ENCODE measurements at regions of chr6 and their contacts with region 1.

Region 1: DNA sequence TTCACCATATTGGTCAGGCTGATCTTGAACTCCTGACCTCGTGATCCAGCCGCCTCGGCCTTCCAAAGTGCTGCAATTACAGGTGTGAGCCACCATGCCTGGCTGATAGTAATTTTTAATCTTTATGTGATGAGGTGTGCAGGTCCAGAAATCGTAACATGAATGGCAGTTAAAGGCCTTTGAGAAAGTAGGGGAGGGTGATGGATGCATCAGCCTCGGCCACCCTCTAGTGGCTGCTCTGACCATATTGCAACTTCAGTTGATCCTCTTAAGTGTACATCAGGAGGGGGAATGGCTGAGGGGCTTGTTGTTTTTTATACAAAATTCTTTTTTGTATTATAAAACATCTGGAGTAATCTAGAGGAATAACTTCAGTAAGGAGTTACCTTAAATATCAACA is 193.0 kb downstream of the ZFAND3 start:
- DNase-seq: peak; percentile 60
- H3K4me3 ChIP-seq: no peak overlapping the region
- H3K27ac ChIP-seq: no peak overlapping the region
- H3K4me1 ChIP-seq: no peaks in the 10 kb centered on the region
- CTCF ChIP-seq: peak; percentile 87

Region 2: GRCh38 chr6:37705239-37706051 is 307.1 kb before region 1 on chr6:
- CTCF ChIA-PET with region 1: no interaction called
- POLR2A ChIA-PET with region 1: no interaction called
- intact Hi-C with region 1: loop called (anchors 5 kb)
- DNase-seq: no peak
- H3K4me3 ChIP-seq: no peak overlapping the region
- H3K27ac ChIP-seq: no peak overlapping the region
- H3K4me1 ChIP-seq: no peaks in the 10 kb centered on the region
- CTCF ChIP-seq: peak; percentile 38; the same call in 1 of the 2 replicates

Region 3: DNA sequence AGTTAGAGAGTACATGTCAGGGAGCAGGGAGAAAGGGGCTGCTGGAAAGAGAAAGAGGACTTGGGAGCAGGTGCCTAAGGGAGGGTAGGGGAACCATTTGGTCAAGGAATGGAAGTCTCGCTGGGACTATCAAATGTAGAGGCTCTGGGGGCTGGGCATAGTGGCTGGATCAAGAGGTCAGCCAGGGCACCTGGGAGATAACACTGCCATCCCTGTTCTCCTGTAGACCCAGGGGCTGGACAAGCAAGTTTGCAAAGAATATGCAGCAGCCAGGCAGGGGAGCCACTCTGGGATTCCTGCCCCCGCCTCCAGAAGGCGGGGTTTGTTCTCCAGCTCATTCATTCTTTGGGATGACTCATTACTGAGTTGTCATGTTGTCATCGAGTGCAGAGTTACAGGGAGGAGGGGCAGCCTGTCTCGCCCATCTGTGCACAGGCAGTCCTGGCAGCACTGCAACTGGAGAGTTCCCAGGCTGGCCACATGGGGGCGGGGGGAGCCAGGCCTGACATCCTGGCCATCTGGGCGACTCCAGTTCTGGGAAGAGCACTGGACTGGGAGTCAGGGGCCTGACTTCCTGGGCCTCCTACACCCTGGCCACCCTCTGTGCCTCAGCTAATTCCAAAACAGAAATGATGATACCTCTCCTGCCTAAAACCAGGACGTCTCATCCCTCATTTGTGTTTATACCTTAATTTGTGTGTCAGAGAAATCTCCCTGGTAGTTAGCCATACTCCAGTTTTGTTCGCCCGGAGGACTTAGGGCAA is 221.2 kb before region 1 on chr6:
- CTCF ChIA-PET with region 1: no interaction called
- POLR2A ChIA-PET with region 1: no interaction called
- intact Hi-C with region 1: loop called (anchors 1 kb)
- DNase-seq: peak; percentile 57
- H3K4me3 ChIP-seq: no peak overlapping the region
- H3K27ac ChIP-seq: no peak overlapping the region
- H3K4me1 ChIP-seq: no peaks in the 10 kb centered on the region
- CTCF ChIP-seq: peak; percentile 87

Region 4: GRCh38 chr6:37965964-37966676 is 46.5 kb before region 1 on chr6:
- CTCF ChIA-PET with region 1: no interaction called
- POLR2A ChIA-PET with region 1: no interaction called
- intact Hi-C with region 1: no loop called
- DNase-seq: no peak
- H3K4me3 ChIP-seq: no peak overlapping the region
- H3K27ac ChIP-seq: no peak overlapping the region
- H3K4me1 ChIP-seq: no peaks in the 10 kb centered on the region
- CTCF ChIP-seq: no peak

Region 5: DNA sequence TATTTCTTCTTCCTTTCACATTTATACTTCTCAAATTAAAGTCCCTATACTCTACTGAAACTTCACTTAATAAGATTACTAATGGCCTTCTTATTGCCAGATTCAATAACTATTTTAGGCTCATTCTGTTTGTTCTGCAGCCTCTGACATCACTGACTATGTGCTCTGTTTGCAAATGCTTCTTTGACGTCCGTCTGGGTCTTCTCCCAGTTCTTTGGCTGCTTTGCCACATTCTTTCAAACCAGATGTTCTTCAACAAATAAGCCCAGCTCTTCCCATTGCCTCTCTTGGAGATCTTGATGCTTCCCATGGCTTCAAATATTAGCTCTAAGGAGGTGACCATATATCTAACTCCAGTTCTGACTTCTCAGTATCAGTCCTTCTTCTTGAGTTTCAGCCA is 509.7 kb after region 1 on chr6:
- CTCF ChIA-PET with region 1: no interaction called
- POLR2A ChIA-PET with region 1: no interaction called
- intact Hi-C with region 1: no loop called
- DNase-seq: no peak
- H3K4me3 ChIP-seq: no peak overlapping the region
- H3K27ac ChIP-seq: no peak overlapping the region
- H3K4me1 ChIP-seq: no peaks in the 10 kb centered on the region
- CTCF ChIP-seq: no peak